HCT116 (cell line): ENCODE measurements at regions of chr1 and their contacts with region 1.

Region 1: DNA sequence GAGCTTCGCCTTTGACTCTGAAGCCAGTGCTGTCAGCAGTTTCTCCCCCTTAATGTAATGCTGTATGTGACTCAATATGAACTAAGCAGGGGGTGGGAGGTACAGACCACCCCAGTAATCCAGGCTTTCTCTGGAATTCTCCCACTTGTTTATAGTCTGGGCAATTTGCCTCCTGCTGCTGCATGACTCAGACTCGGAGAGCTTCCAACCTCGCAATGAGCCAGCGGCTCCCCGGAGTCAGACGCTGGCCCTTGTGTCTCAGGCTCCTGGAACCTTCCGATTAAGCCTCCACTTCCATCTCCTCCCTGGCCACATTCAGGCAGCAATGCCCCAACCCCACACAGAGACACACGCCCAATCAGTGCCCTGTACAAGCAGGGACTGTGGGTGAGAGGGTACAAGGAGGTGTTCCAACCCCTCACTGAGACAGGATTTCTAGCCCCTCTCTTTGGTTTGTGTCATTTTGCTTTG is 471.7 kb upstream of the VAMP3 start:
- DNase-seq: peak; percentile 82
- ATAC-seq: peak; percentile 79
- H3K4me3 ChIP-seq: peak overlapping the region in 1 of 2 experiments; percentile 40; a peak in 3 of 4 replicates
- H3K27ac ChIP-seq: peak overlapping the region; percentile 85
- H3K4me1 ChIP-seq: peaks cover 55 to 59% of the 10 kb centered on the region in 2 experiments
- H3K27me3 ChIP-seq: no peaks in the 10 kb centered on the region
- CTCF ChIP-seq: no peak
- POLR2A ChIP-seq: no peak
- RAD21 ChIP-seq: peak; percentile 43

Region 2: DNA sequence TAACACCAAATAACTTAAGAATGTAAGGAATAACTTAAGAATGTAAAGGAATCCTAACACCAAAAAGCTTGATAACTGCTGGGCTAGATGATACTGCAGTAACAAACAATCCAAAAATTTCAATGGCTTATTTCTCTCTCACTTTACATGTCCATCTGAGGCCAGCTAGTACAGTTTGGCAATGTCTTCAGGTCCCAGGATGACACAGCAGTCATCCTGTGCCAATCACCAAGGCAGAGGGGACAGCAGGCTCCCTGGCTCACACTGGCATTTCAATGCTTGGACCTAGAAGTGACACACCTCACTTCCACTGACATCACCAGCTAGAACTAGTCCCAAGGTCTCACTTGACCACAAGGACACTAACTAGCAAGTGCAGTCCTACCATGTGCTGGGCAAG is 613.1 kb before region 1 on chr1:
- CTCF ChIA-PET with region 1: no interaction called
- POLR2A ChIA-PET with region 1: no interaction called
- RAD21 ChIA-PET with region 1: no interaction called
- intact Hi-C with region 1: no loop called
- DNase-seq: no peak
- ATAC-seq: no peak
- H3K4me3 ChIP-seq: no peak overlapping the region
- H3K27ac ChIP-seq: no peak overlapping the region
- H3K4me1 ChIP-seq: no peaks in the 10 kb centered on the region
- H3K27me3 ChIP-seq: no peaks in the 10 kb centered on the region
- CTCF ChIP-seq: no peak
- POLR2A ChIP-seq: no peak
- RAD21 ChIP-seq: no peak

Region 3: GRCh38 chr1:6971048-6971447 is 328.3 kb before region 1 on chr1:
- CTCF ChIA-PET with region 1: no interaction called
- POLR2A ChIA-PET with region 1: no interaction called
- RAD21 ChIA-PET with region 1: no interaction called
- intact Hi-C with region 1: no loop called
- DNase-seq: no peak
- ATAC-seq: no peak
- H3K4me3 ChIP-seq: no peak overlapping the region
- H3K27ac ChIP-seq: no peak overlapping the region
- H3K4me1 ChIP-seq: peaks cover 10 to 12% of the 10 kb centered on the region in 2 experiments; a peak in 3 of 4 replicates
- H3K27me3 ChIP-seq: no peaks in the 10 kb centered on the region
- CTCF ChIP-seq: no peak
- POLR2A ChIP-seq: no peak
- RAD21 ChIP-seq: no peak

Region 4: GRCh38 chr1:7265771-7266648 is 33.4 kb before region 1 on chr1:
- CTCF ChIA-PET with region 1: no interaction called
- POLR2A ChIA-PET with region 1: no interaction called
- RAD21 ChIA-PET with region 1: no interaction called
- intact Hi-C with region 1: loop called (anchors 2 kb)
- DNase-seq: peak; percentile 98
- ATAC-seq: peak; percentile 88
- H3K4me3 ChIP-seq: peak overlapping the region; percentile 21 to 53
- H3K27ac ChIP-seq: peak overlapping the region; percentile 85
- H3K4me1 ChIP-seq: peaks cover 46 to 61% of the 10 kb centered on the region in 2 experiments
- H3K27me3 ChIP-seq: no peaks in the 10 kb centered on the region
- CTCF ChIP-seq: no peak
- POLR2A ChIP-seq: no peak
- RAD21 ChIP-seq: peak; percentile 44

Region 5: DNA sequence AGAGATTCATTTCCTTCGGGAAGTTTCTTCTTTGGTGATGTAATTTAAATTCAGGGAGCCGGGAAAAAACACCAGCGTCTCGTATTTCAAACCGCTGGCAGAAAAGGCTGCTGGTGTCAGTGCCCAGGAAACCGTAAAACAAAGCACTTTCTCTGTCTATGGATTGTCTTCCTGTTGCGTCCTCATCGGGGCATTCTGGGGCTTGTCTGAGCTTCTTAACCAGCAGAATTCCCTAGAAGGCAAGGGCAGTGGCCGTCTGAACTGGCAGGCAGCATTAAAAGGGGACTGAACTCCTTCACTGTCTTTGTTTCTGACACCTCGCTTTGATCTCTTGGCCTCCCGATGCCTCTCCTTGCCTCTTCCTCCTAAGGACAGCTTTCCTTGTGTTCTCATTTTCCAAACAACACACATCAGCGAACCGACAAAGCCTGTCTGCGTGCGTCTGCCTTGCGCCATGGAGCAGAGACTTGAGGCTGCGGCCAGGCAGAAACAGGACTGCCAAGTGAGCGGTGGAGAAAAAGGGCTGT is 80.1 kb after region 1 on chr1:
- CTCF ChIA-PET with region 1: no interaction called
- POLR2A ChIA-PET with region 1: no interaction called
- RAD21 ChIA-PET with region 1: no interaction called
- intact Hi-C with region 1: no loop called
- DNase-seq: no peak
- ATAC-seq: no peak
- H3K4me3 ChIP-seq: no peak overlapping the region
- H3K27ac ChIP-seq: no peak overlapping the region
- H3K4me1 ChIP-seq: peaks cover 0 to 4% of the 10 kb centered on the region in 2 experiments; a peak in 2 of 4 replicates
- H3K27me3 ChIP-seq: no peaks in the 10 kb centered on the region
- CTCF ChIP-seq: no peak
- POLR2A ChIP-seq: no peak
- RAD21 ChIP-seq: no peak

Region 6: GRCh38 chr1:7401814-7402537 is 102.6 kb after region 1 on chr1:
- CTCF ChIA-PET with region 1: no interaction called
- POLR2A ChIA-PET with region 1: no interaction called
- RAD21 ChIA-PET with region 1: no interaction called
- intact Hi-C with region 1: loop called (anchors 5 kb)
- DNase-seq: peak; percentile 97
- ATAC-seq: peak; percentile 96
- H3K4me3 ChIP-seq: no peak overlapping the region
- H3K27ac ChIP-seq: peak overlapping the region; percentile 36
- H3K4me1 ChIP-seq: peaks cover 17 to 24% of the 10 kb centered on the region in 2 experiments
- H3K27me3 ChIP-seq: no peaks in the 10 kb centered on the region
- CTCF ChIP-seq: no peak
- POLR2A ChIP-seq: no peak
- RAD21 ChIP-seq: peak; percentile 31